A549 (cell line): ENCODE measurements at regions of chr17 and their contacts with region 1.

Region 1: DNA sequence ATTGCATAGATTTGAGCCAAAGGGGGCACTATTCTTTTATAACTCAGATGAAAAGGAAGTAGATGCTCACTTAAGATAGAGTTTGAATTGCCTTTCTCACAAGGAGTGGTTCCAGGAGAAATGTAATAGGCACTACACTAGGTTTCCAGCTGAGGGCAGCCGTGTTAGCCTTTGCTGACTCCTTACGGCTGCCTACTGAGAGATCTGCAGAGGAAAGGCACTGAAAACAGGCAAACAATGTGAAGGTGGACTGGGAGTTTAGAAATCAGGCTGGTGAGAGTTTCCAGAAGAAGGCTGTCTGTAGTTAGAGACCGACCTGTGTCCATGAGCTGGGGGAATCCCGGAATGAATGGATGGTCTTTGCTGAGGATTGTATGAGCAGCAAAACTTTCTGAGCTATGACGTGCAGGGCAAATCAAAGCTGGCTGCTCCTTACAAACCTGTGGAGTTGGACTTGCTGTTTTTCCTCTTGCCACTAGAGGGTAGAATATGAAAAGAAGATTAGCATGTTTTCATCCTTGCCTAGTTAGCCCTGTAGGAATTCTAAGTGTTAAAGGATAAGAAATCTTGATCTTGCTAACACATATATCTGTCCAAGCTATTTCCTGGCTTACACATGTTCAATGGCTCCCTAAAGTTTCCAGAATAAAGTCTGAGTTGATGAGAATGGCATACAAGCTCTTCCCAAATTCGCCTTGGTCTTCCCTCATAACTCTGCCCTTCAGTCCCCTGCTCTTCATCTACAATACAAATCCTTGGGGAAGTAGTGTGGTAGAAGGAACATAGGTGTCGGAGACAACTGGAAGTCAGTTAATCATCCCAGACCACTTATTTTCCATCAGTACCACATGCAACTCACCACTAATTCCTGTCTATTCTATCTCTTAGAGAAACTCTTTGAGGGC is 20.1 kb upstream of the TAOK1 start:
- DNase-seq: peak; percentile 89 to 93
- ATAC-seq: peak; percentile 97 to 99
- H3K4me3 ChIP-seq: no peak overlapping the region; the same call in 2 of the 3 replicates
- H3K27ac ChIP-seq: peak overlapping the region; percentile 20 to 63; a peak in 4 of 6 replicates
- H3K4me1 ChIP-seq: peaks cover 14% of the 10 kb centered on the region
- CTCF ChIP-seq: peak; percentile 94
- EP300 ChIP-seq: no peak
- POLR2A ChIP-seq: no peak
- RAD21 ChIP-seq: peak; percentile 82 to 89

Region 2: GRCh38 chr17:29148790-29149430 is 221.2 kb before region 1 on chr17:
- CTCF ChIA-PET with region 1: interaction called, 22 read pairs
- POLR2A ChIA-PET with region 1: no interaction called
- DNase-seq: peak; percentile 92 to 95
- ATAC-seq: peak; percentile 87 to 95
- H3K4me3 ChIP-seq: peak overlapping the region; percentile 44
- H3K27ac ChIP-seq: peak overlapping the region; percentile 82 to 94
- H3K4me1 ChIP-seq: peaks cover 63% of the 10 kb centered on the region
- CTCF ChIP-seq: peak; percentile 98
- EP300 ChIP-seq: no peak
- POLR2A ChIP-seq: peak; percentile 84
- RAD21 ChIP-seq: peak; percentile 96 to 100

Region 3: GRCh38 chr17:29263916-29264315 is 106.2 kb before region 1 on chr17:
- CTCF ChIA-PET with region 1: no interaction called
- POLR2A ChIA-PET with region 1: no interaction called
- DNase-seq: no peak
- ATAC-seq: no peak
- H3K4me3 ChIP-seq: no peak overlapping the region
- H3K27ac ChIP-seq: no peak overlapping the region
- H3K4me1 ChIP-seq: peaks cover 6% of the 10 kb centered on the region; the same call in 2 of the 3 replicates
- CTCF ChIP-seq: no peak
- EP300 ChIP-seq: no peak
- POLR2A ChIP-seq: no peak
- RAD21 ChIP-seq: no peak

Region 4: GRCh38 chr17:29279397-29280070 is 90.5 kb before region 1 on chr17:
- CTCF ChIA-PET with region 1: no interaction called
- POLR2A ChIA-PET with region 1: no interaction called
- DNase-seq: no peak
- ATAC-seq: no peak
- H3K4me3 ChIP-seq: no peak overlapping the region
- H3K27ac ChIP-seq: no peak overlapping the region
- H3K4me1 ChIP-seq: peaks cover 13% of the 10 kb centered on the region; the same call in 2 of the 3 replicates
- CTCF ChIP-seq: no peak
- EP300 ChIP-seq: no peak
- POLR2A ChIP-seq: no peak
- RAD21 ChIP-seq: no peak

Region 5: DNA sequence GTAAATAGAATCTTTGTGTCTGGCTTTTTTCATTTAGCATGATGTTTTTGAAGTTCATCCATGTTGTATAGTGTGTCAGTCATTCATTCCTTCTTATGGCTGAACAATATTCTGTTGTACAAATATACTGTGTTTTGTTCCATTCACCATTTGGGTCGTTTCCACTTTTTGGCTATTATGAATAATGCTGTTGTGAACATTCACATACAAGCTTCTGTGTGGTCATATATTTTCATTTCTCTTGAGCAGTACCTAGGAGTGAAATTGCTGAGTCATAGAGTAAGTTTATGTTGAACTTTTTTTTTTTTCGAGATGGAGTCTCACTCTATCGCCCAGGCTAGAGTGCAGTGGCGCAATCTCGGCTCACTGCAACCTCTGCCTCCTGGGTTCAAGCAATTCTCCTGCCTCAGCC is 12.3 kb before region 1 on chr17:
- CTCF ChIA-PET with region 1: interaction called, 158 read pairs
- POLR2A ChIA-PET with region 1: no interaction called
- DNase-seq: no peak
- ATAC-seq: peak in 1 of 2 experiments; percentile 34; a peak in 2 of 6 replicates
- H3K4me3 ChIP-seq: no peak overlapping the region
- H3K27ac ChIP-seq: peak overlapping the region; percentile 50 to 66
- H3K4me1 ChIP-seq: peaks cover 9% of the 10 kb centered on the region
- CTCF ChIP-seq: no peak
- EP300 ChIP-seq: no peak
- POLR2A ChIP-seq: no peak
- RAD21 ChIP-seq: no peak

Region 6: DNA sequence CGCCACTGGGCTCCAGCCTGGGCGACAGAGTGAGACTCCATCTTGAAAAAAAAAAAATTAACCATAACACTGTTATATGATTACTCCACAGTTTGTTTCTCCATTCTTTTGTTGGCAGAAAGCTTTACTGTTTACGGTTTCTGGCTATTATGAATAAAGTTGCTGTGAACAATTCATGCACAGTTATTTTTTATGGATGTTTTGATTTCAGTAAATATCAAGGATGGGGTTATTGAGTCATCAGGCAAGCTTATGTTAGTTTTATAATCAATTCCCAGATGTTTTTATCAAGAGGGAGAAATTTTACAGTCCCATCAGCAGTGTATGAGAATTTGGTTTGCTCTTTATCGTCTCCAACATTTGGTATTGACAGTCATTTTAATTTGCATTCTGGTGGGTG is 88.0 kb after region 1 on chr17:
- CTCF ChIA-PET with region 1: interaction called, 11 read pairs
- POLR2A ChIA-PET with region 1: no interaction called
- DNase-seq: no peak
- ATAC-seq: no peak
- H3K4me3 ChIP-seq: no peak overlapping the region
- H3K27ac ChIP-seq: no peak overlapping the region
- H3K4me1 ChIP-seq: no peaks in the 10 kb centered on the region
- CTCF ChIP-seq: no peak
- EP300 ChIP-seq: no peak
- POLR2A ChIP-seq: no peak
- RAD21 ChIP-seq: no peak

Region 7: GRCh38 chr17:29524460-29525091 is 154.5 kb after region 1 on chr17:
- CTCF ChIA-PET with region 1: interaction called, 29 read pairs
- POLR2A ChIA-PET with region 1: no interaction called
- DNase-seq: no peak
- ATAC-seq: no peak
- H3K4me3 ChIP-seq: no peak overlapping the region
- H3K27ac ChIP-seq: no peak overlapping the region
- H3K4me1 ChIP-seq: peaks cover 7% of the 10 kb centered on the region
- CTCF ChIP-seq: no peak
- EP300 ChIP-seq: no peak
- POLR2A ChIP-seq: no peak
- RAD21 ChIP-seq: no peak

Region 8: DNA sequence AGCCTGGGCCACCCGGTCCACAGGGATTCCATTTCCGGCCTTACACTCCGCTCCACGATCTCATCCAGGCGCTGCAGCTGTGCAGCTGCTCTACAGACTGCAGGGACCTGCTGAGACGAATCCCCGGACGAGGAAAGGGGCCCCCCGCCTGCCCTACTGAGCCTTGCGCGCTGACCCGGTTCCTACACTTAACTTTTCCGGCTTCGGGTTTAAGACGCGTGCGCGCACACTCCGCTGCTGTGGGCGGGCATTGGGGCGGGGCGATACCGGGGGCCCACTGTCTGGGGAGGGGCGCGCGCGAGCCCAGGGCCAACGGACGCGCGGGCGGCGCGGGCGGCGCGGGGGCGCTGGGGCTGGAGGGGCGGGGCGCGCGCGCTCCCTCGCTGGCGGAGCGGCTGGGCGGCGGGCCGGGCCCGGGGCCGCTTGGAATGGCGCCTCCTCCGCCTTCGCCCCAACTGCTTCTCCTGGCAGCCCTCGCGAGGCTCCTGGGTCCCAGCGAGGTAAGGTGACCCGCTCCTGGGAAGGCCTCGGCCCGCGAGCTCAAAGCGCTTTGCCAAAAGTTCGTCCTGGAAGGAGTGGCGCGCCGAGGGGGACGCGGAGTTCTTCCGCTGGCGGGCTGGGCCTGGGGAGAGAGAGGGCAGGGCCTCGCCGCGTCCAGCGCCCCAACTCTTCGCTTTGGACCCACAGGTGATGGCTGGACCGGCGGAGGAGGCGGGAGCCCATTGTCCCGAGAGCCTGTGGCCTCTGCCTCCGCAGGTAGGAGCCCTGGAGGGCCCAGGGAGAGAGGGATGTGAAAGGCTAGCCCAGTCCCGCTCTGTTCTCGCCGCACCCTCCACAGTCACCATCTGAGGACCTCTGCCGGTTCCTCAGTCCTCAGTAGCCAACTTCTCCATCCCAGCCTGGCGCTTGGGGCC is 198.5 kb after region 1 on chr17 and contains the start of gene TP53I13:
- CTCF ChIA-PET with region 1: interaction called, 100 read pairs
- POLR2A ChIA-PET with region 1: interaction called, 4 read pairs
- DNase-seq: peak; percentile 82 to 90
- ATAC-seq: peak; percentile 40 to 62
- H3K4me3 ChIP-seq: peak within 1 kb of the TSS; percentile 62
- H3K27ac ChIP-seq: peak within 1 kb of the TSS; percentile 92 to 94
- H3K4me1 ChIP-seq: peaks cover 20% of the 10 kb centered on the region
- CTCF ChIP-seq: no peak
- EP300 ChIP-seq: no peak
- POLR2A ChIP-seq: peak; percentile 81
- RAD21 ChIP-seq: no peak
- polyA plus RNA-seq, gene TP53I13: 27.5 and 31.3 TPM in 2 replicates